Caco-2 (cell line): ENCODE measurements at regions of chr5 and their contacts with region 1.

Region 1: GRCh38 chr5:132272311-132273210 is 15.1 kb downstream of the PDLIM4 start:
- DNase-seq: peak; percentile 81 to 86
- H3K4me3 ChIP-seq: no peak overlapping the region
- H3K4me3 Mint-ChIP-seq: no peak overlapping the region
- H3K27ac Mint-ChIP-seq: no peak overlapping the region
- H3K4me1 ChIP-seq: peaks cover 30% of the 10 kb centered on the region
- H3K4me1 Mint-ChIP-seq: peaks cover 32% of the 10 kb centered on the region
- H3K27me3 ChIP-seq: no peaks in the 10 kb centered on the region
- H3K27me3 Mint-ChIP-seq: no peaks in the 10 kb centered on the region
- CTCF ChIP-seq: peak; percentile 86 to 88

Region 2: GRCh38 chr5:132180134-132180745 is 92.3 kb before region 1 on chr5:
- CTCF ChIA-PET with region 1: no interaction called
- POLR2A ChIA-PET with region 1: no interaction called
- intact Hi-C with region 1: loop called (anchors 1 kb)
- DNase-seq: peak in 1 of 2 experiments; percentile 49
- H3K4me3 ChIP-seq: no peak overlapping the region
- H3K4me3 Mint-ChIP-seq: no peak overlapping the region
- H3K27ac Mint-ChIP-seq: no peak overlapping the region
- H3K4me1 ChIP-seq: peaks cover 3% of the 10 kb centered on the region; the same call in 1 of the 2 replicates
- H3K4me1 Mint-ChIP-seq: peaks cover 13% of the 10 kb centered on the region
- H3K27me3 ChIP-seq: no peaks in the 10 kb centered on the region
- H3K27me3 Mint-ChIP-seq: no peaks in the 10 kb centered on the region
- CTCF ChIP-seq: peak; percentile 71 to 76

Region 3: GRCh38 chr5:132315529-132316083 is 43.0 kb after region 1 on chr5:
- CTCF ChIA-PET with region 1: no interaction called
- POLR2A ChIA-PET with region 1: no interaction called
- intact Hi-C with region 1: loop called (anchors 1 kb)
- DNase-seq: no peak
- H3K4me3 ChIP-seq: no peak overlapping the region
- H3K4me3 Mint-ChIP-seq: no peak overlapping the region
- H3K27ac Mint-ChIP-seq: no peak overlapping the region
- H3K4me1 ChIP-seq: no peaks in the 10 kb centered on the region
- H3K4me1 Mint-ChIP-seq: peaks cover 6% of the 10 kb centered on the region
- H3K27me3 ChIP-seq: no peaks in the 10 kb centered on the region
- H3K27me3 Mint-ChIP-seq: no peaks in the 10 kb centered on the region
- CTCF ChIP-seq: peak in 1 of 2 experiments; percentile 42

Region 4: DNA sequence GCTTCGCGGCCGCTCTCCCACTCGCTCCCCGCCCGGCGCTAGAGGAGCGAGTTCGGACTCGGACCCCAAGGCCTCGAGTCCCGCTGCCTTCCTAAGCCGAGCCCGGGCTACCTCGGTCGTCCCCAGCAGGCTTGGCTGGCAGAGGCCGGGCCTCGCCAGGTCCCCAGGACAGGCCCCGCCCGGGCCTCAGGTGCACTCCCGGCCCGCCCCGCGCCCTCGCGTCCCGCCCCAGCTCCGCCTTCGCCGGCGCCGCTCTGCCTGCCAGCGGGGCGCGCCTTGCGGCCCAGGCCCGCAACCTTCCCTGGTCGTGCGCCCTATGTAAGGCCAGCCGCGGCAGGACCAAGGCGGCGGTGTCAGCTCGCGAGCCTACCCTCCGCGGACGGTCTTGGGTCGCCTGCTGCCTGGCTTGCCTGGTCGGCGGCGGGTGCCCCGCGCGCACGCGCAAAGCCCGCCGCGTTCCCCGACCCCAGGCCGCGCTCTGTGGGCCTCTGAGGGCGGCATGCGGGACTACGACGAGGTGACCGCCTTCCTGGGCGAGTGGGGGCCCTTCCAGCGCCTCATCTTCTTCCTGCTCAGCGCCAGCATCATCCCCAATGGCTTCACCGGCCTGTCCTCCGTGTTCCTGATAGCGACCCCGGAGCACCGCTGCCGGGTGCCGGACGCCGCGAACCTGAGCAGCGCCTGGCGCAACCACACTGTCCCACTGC is 97.1 kb after region 1 on chr5 and contains the start of gene SLC22A5:
- CTCF ChIA-PET with region 1: interaction called, 3 read pairs
- POLR2A ChIA-PET with region 1: no interaction called
- intact Hi-C with region 1: loop called (anchors 2 kb)
- DNase-seq: peak; percentile 86 to 90
- H3K4me3 ChIP-seq: peak within 1 kb of the TSS; percentile 79
- H3K4me3 Mint-ChIP-seq: peak within 1 kb of the TSS; percentile 79
- H3K27ac Mint-ChIP-seq: peak within 1 kb of the TSS; percentile 85
- H3K4me1 ChIP-seq: peaks cover 44% of the 10 kb centered on the region
- H3K4me1 Mint-ChIP-seq: peaks cover 21% of the 10 kb centered on the region
- H3K27me3 ChIP-seq: no peaks in the 10 kb centered on the region
- H3K27me3 Mint-ChIP-seq: no peaks in the 10 kb centered on the region
- CTCF ChIP-seq: no peak
- total RNA-seq, gene SLC22A5: 19.1 and 20.2 TPM in 2 replicates

Region 5: DNA sequence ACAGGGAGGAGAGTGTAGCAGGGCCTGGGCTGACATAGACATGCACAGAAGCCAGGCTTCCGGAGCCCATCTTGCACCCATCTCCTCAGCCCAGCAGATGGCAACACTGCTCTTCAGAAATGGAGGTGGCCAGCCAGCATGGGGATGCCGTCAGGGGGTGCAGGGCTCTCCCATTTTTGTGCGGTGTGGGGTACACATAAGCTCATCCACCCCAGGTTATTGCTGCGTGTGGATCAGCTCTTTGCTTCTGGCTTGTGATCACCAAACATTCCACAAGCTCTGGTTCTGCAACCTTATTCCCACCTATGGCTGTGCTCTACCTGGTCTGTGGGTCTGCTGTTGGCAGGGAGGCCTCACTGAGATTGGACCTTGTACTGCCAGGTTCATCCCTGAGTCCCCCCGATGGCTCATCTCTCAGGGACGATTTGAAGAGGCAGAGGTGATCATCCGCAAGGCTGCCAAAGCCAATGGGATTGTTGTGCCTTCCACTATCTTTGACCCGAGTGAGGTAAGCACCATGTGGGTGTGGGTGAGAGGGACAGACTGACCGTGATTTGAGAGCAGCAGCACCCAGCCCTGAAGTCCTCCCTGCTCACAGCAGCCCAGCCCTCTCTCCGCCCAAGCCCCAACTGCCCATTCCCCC is 114.2 kb after region 1 on chr5:
- CTCF ChIA-PET with region 1: no interaction called
- POLR2A ChIA-PET with region 1: no interaction called
- intact Hi-C with region 1: loop called (anchors 5 kb)
- DNase-seq: peak; percentile 65
- H3K4me3 ChIP-seq: no peak overlapping the region
- H3K4me3 Mint-ChIP-seq: no peak overlapping the region
- H3K27ac Mint-ChIP-seq: no peak overlapping the region
- H3K4me1 ChIP-seq: peaks cover 29% of the 10 kb centered on the region
- H3K4me1 Mint-ChIP-seq: no peaks in the 10 kb centered on the region
- H3K27me3 ChIP-seq: no peaks in the 10 kb centered on the region
- H3K27me3 Mint-ChIP-seq: no peaks in the 10 kb centered on the region
- CTCF ChIP-seq: peak; percentile 69 to 73